Activated T-helper 1 cell treated with anti-CD3 and anti-CD28 coated beads, Interleukin-12 subunit alpha, Interleukin-12 subunit beta, Interleukin-2, Interleukin-4 antibody, amounts not matched to agents 30 ng/mL and 10 ng/mL and 1 ng/mL, durations not matched to agents 14 hours and 24 hours and 36 hours (primary cell): ENCODE measurements at regions of chrX and their contacts with region 1.

Region 1: GRCh38 chrX:134520860-134521390 is 61.0 kb downstream of the HPRT1 start:
- DNase-seq: no peak
- H3K4me3 Mint-ChIP-seq: no peak overlapping the region
- H3K27ac Mint-ChIP-seq: no peak overlapping the region
- H3K4me1 Mint-ChIP-seq: peaks cover 10% of the 10 kb centered on the region
- H3K27me3 Mint-ChIP-seq: no peaks in the 10 kb centered on the region

Region 2: GRCh38 chrX:134764212-134764785 is 243.4 kb after region 1 on chrX:
- intact Hi-C with region 1: loop called (anchors 1 kb)
- DNase-seq: no peak
- H3K4me3 Mint-ChIP-seq: no peak overlapping the region
- H3K27ac Mint-ChIP-seq: no peak overlapping the region
- H3K4me1 Mint-ChIP-seq: no peaks in the 10 kb centered on the region
- H3K27me3 Mint-ChIP-seq: no peaks in the 10 kb centered on the region

Region 3: DNA sequence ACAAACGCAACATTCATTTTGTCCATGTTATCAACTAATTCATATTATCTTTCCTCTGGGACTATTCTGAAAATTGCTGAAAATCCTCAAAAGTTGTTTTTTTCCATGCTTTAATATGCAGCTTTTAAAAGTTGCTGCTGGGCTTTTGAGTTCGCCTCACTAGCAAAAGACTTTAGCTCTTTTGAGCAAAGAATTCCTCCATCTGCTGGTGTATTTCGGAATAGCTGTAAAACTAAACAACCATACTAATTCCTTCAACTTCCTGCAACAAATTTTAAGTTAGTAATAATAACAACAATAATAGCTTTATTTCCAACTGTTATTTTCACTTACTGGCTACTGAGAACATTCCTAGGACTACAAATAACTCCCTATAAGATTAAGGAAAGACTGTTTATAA is 261.9 kb after region 1 on chrX:
- intact Hi-C with region 1: loop called (anchors 1 kb)
- DNase-seq: no peak
- H3K4me3 Mint-ChIP-seq: no peak overlapping the region
- H3K27ac Mint-ChIP-seq: no peak overlapping the region
- H3K4me1 Mint-ChIP-seq: no peaks in the 10 kb centered on the region
- H3K27me3 Mint-ChIP-seq: no peaks in the 10 kb centered on the region